ENCODE measurements at regions of chr7 and their contacts with region 1.

Region 1: GRCh38 chr7:150685219-150686029 is at the start of gene GIMAP2:
- DNase-seq: peak in 5 of 10 donors; percentile 7 to 68 (median 58)
- ATAC-seq: peak; percentile 71 to 89
- H3K4me3 Mint-ChIP-seq: peak within 1 kb of the TSS; percentile 94 to 100 (median 97)
- H3K27ac Mint-ChIP-seq: peak within 1 kb of the TSS; percentile 95 to 100 (median 98)
- H3K4me1 Mint-ChIP-seq: peaks cover 46 to 93% (median 80%) of the 10 kb centered on the region in 4 donors
- H3K27me3 Mint-ChIP-seq: no peaks in the 10 kb centered on the region
- polyA plus RNA-seq, gene GIMAP2: 89.3 to 102 (median 93.8) TPM

Region 2: DNA sequence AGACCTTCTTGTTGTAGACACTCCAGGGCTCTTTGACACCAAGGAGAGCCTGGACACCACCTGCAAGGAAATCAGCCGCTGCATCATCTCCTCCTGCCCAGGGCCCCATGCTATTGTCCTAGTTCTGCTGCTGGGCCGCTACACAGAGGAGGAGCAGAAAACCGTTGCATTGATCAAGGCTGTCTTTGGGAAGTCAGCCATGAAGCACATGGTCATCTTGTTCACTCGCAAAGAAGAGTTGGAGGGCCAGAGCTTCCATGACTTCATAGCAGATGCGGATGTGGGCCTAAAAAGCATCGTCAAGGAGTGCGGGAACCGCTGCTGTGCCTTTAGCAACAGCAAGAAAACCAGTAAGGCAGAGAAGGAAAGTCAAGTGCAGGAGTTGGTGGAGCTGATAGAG is 165.3 kb before region 1 on chr7:
- POLR2A ChIA-PET with region 1: interaction called, 44 read pairs
- DNase-seq: peak in 4 of 10 donors; percentile 27 to 70 (median 36)
- ATAC-seq: peak; percentile 19 to 26
- H3K4me3 Mint-ChIP-seq: peak overlapping the region; percentile 91 to 100 (median 99)
- H3K27ac Mint-ChIP-seq: peak overlapping the region; percentile 87 to 99 (median 94)
- H3K4me1 Mint-ChIP-seq: peaks cover 16 to 43% (median 35%) of the 10 kb centered on the region in 4 donors
- H3K27me3 Mint-ChIP-seq: no peaks in the 10 kb centered on the region

Region 3: GRCh38 chr7:150538259-150538658 is 147.2 kb before region 1 on chr7:
- POLR2A ChIA-PET with region 1: no interaction called
- DNase-seq: no peak
- ATAC-seq: no peak
- H3K4me3 Mint-ChIP-seq: no peak overlapping the region
- H3K27ac Mint-ChIP-seq: no peak overlapping the region
- H3K4me1 Mint-ChIP-seq: peaks cover 4 to 32% (median 15%) of the 10 kb centered on the region in 4 donors
- H3K27me3 Mint-ChIP-seq: no peaks in the 10 kb centered on the region

Region 4: DNA sequence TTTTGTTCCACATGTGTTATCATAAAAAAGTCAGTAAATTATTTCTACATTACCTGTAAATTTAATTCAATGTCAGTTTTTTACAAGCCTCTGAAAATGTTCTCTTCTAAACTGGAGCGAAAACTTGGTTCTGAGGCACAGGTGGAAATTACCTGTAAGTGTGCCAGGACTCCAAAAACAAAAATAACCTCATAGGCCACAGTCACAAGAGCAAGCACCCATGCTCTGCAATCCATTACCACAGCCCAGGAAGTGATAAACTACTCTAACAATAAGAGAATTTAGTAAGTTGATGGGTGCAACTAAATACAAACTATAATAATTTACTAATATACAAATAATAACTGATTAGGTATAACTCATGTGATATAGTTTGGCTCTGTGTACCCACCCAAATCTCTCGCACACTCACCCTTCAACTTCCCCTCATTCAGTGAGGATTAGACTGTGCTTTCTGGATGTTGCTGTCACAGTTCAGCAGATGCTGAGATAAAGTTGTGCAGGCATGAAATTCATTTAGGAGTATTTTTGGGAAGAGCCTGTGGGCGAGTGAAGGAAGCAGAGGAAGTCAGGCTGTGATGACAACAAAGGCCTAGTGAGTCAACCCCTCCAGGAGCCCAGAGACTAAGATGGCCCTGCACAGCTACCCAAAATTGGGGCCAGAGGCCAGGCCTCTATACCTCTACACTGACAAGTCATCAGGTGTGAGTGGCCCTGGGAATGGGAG is 36.9 kb before region 1 on chr7:
- POLR2A ChIA-PET with region 1: interaction called, 14 read pairs
- DNase-seq: peak in 2 of 10 donors; percentile 49 to 53
- ATAC-seq: peak; percentile 85 to 87
- H3K4me3 Mint-ChIP-seq: peak overlapping the region in 9 of 10 donors; percentile 43 to 75 (median 57)
- H3K27ac Mint-ChIP-seq: peak overlapping the region; percentile 82 to 94 (median 88)
- H3K4me1 Mint-ChIP-seq: peaks cover 16 to 77% (median 55%) of the 10 kb centered on the region in 4 donors
- H3K27me3 Mint-ChIP-seq: no peaks in the 10 kb centered on the region

Region 5: DNA sequence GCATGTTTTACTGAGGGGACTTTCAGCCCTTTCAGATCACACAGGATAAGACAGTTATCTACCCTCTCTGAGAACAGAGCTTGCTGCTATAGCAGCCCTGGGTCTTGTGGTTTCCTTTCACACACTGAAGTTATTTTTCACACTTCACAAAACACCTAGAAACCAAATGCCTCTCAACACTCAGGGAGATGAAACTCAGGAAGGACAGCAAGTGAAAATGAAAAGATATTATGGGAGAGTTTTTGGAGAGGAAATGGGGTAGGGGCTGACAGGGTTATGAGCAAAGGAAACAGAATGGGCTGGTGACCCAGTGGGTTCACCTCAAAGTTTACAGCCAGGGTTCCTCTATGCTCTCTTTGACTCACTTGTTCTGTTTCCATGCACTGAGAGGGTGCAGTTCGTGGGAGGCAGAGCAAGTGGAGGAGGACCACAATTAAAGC is 16.9 kb before region 1 on chr7:
- POLR2A ChIA-PET with region 1: interaction called, 54 read pairs
- DNase-seq: peak in 9 of 10 donors; percentile 41 to 86 (median 71)
- ATAC-seq: peak; percentile 79 to 92
- H3K4me3 Mint-ChIP-seq: peak overlapping the region; percentile 60 to 85 (median 78)
- H3K27ac Mint-ChIP-seq: peak overlapping the region; percentile 94 to 100 (median 98)
- H3K4me1 Mint-ChIP-seq: peaks cover 34 to 93% (median 89%) of the 10 kb centered on the region in 4 donors
- H3K27me3 Mint-ChIP-seq: no peaks in the 10 kb centered on the region

Region 6: GRCh38 chr7:150695654-150696053 is 10.2 kb after region 1 on chr7:
- POLR2A ChIA-PET with region 1: interaction called, 16 read pairs
- DNase-seq: no peak
- ATAC-seq: no peak
- H3K4me3 Mint-ChIP-seq: no peak overlapping the region
- H3K27ac Mint-ChIP-seq: peak overlapping the region in 2 of 10 donors; percentile 27 to 58
- H3K4me1 Mint-ChIP-seq: peaks cover 1 to 28% (median 15%) of the 10 kb centered on the region in 4 donors
- H3K27me3 Mint-ChIP-seq: no peaks in the 10 kb centered on the region

Region 7: GRCh38 chr7:150737265-150738055 is 52.0 kb after region 1 on chr7 and contains the start of gene GIMAP5:
- POLR2A ChIA-PET with region 1: interaction called, 47 read pairs
- DNase-seq: peak in 6 of 10 donors; percentile 27 to 60 (median 40)
- ATAC-seq: peak; percentile 67 to 76
- H3K4me3 Mint-ChIP-seq: peak within 1 kb of the TSS; percentile 88 to 100 (median 98)
- H3K27ac Mint-ChIP-seq: peak within 1 kb of the TSS; percentile 93 to 100 (median 96)
- H3K4me1 Mint-ChIP-seq: peaks cover 48 to 75% (median 68%) of the 10 kb centered on the region in 4 donors
- H3K27me3 Mint-ChIP-seq: no peaks in the 10 kb centered on the region
- polyA plus RNA-seq, gene GIMAP5: 320 to 506 (median 401) TPM

Region 8: GRCh38 chr7:150748376-150748775 is 63.0 kb after region 1 on chr7:
- POLR2A ChIA-PET with region 1: interaction called, 39 read pairs
- DNase-seq: peak in 1 of 10 donors; percentile 57
- ATAC-seq: peak; percentile 37 to 61
- H3K4me3 Mint-ChIP-seq: peak overlapping the region; percentile 16 to 88 (median 69)
- H3K27ac Mint-ChIP-seq: peak overlapping the region; percentile 89 to 100 (median 95)
- H3K4me1 Mint-ChIP-seq: peaks cover 51 to 93% (median 90%) of the 10 kb centered on the region in 4 donors
- H3K27me3 Mint-ChIP-seq: no peaks in the 10 kb centered on the region